ENCODE measurements at regions of chr10 and their contacts with region 1.

Region 1: DNA sequence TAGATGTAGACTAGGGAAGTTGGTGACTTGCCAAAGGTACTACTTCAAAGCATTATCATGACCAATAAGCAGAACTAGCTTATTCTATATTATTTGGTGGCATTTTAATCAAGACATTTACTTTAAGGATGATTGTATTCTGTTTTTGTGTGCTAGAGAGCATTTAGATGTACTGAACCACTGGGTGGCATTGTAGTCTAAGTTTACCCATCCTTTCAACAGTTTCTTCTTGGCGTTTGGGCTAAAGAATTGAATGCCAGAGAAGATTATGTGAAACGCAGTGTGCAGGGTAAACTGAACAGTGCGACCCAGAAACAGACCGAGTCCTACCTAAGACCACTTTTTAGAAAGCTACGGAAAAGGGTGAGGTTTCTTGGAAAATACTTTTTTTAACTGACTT is 26.8 kb downstream of the PRPF18 start:
- DNase-seq: no peak
- ATAC-seq: peak; percentile 34 to 81 (median 54)
- H3K4me3 ChIP-seq: no peak overlapping the region
- H3K27ac ChIP-seq: peak overlapping the region; percentile 6
- H3K4me1 ChIP-seq: peaks cover 34% of the 10 kb centered on the region
- H3K27me3 ChIP-seq: no peaks in the 10 kb centered on the region
- CTCF ChIP-seq: peak; percentile 52

Region 2: GRCh38 chr10:13542533-13542932 is 71.0 kb before region 1 on chr10:
- intact Hi-C with region 1: no loop called
- DNase-seq: no peak
- ATAC-seq: no peak
- H3K4me3 ChIP-seq: no peak overlapping the region
- H3K27ac ChIP-seq: no peak overlapping the region
- H3K4me1 ChIP-seq: no peaks in the 10 kb centered on the region
- H3K27me3 ChIP-seq: peaks cover 0 to 12% (median 5%) of the 10 kb centered on the region in 3 donors
- CTCF ChIP-seq: no peak

Region 3: GRCh38 chr10:13659897-13660550 is 46.5 kb after region 1 on chr10:
- intact Hi-C with region 1: loop called in 1 of 2 experiments (anchors 5 kb)
- DNase-seq: peak; percentile 72 to 83
- ATAC-seq: peak; percentile 47 to 85 (median 64)
- H3K4me3 ChIP-seq: no peak overlapping the region
- H3K27ac ChIP-seq: no peak overlapping the region
- H3K4me1 ChIP-seq: peaks cover 8% of the 10 kb centered on the region
- H3K27me3 ChIP-seq: no peaks in the 10 kb centered on the region
- CTCF ChIP-seq: peak; percentile 94

Measured in psoas muscle (tissue), 8 donors.